Activated naive CD4-positive, alpha-beta T cell treated with anti-CD3 and anti-CD28 coated beads for 36 hours (primary cell): ENCODE measurements at regions of chr15 and their contacts with region 1.

Region 1: GRCh38 chr15:52005748-52006701 is 13.0 kb upstream of the MAPK6 start:
- DNase-seq: peak; percentile 58
- H3K4me3 Mint-ChIP-seq: no peak overlapping the region
- H3K27ac Mint-ChIP-seq: peak overlapping the region; percentile 30
- H3K4me1 Mint-ChIP-seq: peaks cover 50% of the 10 kb centered on the region
- H3K27me3 Mint-ChIP-seq: peaks cover 6% of the 10 kb centered on the region

Region 2: GRCh38 chr15:51750792-51751685 is 255.0 kb before region 1 on chr15 and contains the start of gene TMOD2:
- CTCF ChIA-PET with region 1: no interaction called
- intact Hi-C with region 1: no loop called
- DNase-seq: peak; percentile 53
- H3K4me3 Mint-ChIP-seq: peak within 1 kb of the TSS; percentile 81
- H3K27ac Mint-ChIP-seq: no peak within 1 kb of the TSS
- H3K4me1 Mint-ChIP-seq: peaks cover 27% of the 10 kb centered on the region
- H3K27me3 Mint-ChIP-seq: peaks cover 2% of the 10 kb centered on the region
- total RNA-seq, gene TMOD2: 6.4 to 6.8 TPM

Region 3: GRCh38 chr15:51829360-51830275 is 176.4 kb before region 1 on chr15 and contains the start of gene TMOD3:
- CTCF ChIA-PET with region 1: no interaction called
- intact Hi-C with region 1: loop called (anchors 5 kb)
- DNase-seq: peak; percentile 91
- H3K4me3 Mint-ChIP-seq: peak within 1 kb of the TSS; percentile 89
- H3K27ac Mint-ChIP-seq: peak within 1 kb of the TSS; percentile 83
- H3K4me1 Mint-ChIP-seq: peaks cover 39% of the 10 kb centered on the region
- H3K27me3 Mint-ChIP-seq: no peaks in the 10 kb centered on the region
- total RNA-seq, gene TMOD3: 45.9 to 52.8 TPM

Region 4: GRCh38 chr15:51971375-51972133 is 34.5 kb before region 1 on chr15 and contains the start of gene LEO1:
- CTCF ChIA-PET with region 1: interaction called, 4 read pairs
- intact Hi-C with region 1: loop called (anchors 2 kb)
- DNase-seq: peak; percentile 95
- H3K4me3 Mint-ChIP-seq: peak within 1 kb of the TSS; percentile 90
- H3K27ac Mint-ChIP-seq: peak within 1 kb of the TSS; percentile 96
- H3K4me1 Mint-ChIP-seq: peaks cover 24% of the 10 kb centered on the region
- H3K27me3 Mint-ChIP-seq: peaks cover 2% of the 10 kb centered on the region
- total RNA-seq, gene LEO1: 21.0 to 23.8 TPM

Region 5: DNA sequence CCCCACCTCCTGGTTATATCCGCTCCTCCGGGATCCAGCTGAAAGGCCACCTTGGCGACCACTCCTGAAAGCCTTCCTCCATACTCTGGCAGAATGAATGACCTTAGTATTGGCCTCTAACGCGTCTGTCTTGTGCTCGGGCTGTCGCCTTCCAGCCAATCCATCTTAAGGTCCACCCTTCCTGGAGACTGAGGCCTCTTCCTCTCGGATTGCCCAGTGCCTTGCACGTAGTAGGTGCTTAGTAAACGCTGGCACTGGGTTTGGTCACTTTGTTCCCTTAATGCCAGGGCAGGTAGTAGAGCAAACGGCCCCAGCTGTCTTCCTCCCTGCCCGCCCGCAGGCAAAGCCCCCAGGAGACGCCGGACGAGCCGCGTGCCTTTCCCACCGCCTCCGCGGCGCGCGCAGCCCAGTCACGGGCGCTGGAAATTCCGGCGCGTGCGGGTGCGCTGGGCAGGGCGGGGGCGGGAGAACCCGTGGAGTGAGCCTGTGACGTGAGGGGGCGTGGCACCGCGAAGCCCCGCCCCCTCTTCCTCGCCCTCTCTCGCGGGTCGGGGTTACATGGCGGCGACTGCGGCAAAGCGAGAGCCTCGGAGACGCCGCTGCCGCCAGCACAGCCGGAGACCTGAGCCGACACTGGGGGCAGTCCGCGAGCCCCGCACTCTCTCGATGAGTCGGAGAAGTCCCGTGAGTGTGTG is 12.8 kb after region 1 on chr15 and contains the start of gene MAPK6:
- CTCF ChIA-PET with region 1: interaction called, 3 read pairs
- intact Hi-C with region 1: loop called (anchors 1 kb)
- DNase-seq: peak; percentile 93
- H3K4me3 Mint-ChIP-seq: peak within 1 kb of the TSS; percentile 97
- H3K27ac Mint-ChIP-seq: peak within 1 kb of the TSS; percentile 97
- H3K4me1 Mint-ChIP-seq: peaks cover 37% of the 10 kb centered on the region
- H3K27me3 Mint-ChIP-seq: no peaks in the 10 kb centered on the region
- total RNA-seq, gene MAPK6: 16.7 to 17.2 TPM

Region 6: GRCh38 chr15:52078876-52079700 is 73.1 kb after region 1 on chr15:
- CTCF ChIA-PET with region 1: interaction called, 10 read pairs
- intact Hi-C with region 1: no loop called
- DNase-seq: peak; percentile 93
- H3K4me3 Mint-ChIP-seq: no peak overlapping the region
- H3K27ac Mint-ChIP-seq: no peak overlapping the region
- H3K4me1 Mint-ChIP-seq: peaks cover 2% of the 10 kb centered on the region
- H3K27me3 Mint-ChIP-seq: no peaks in the 10 kb centered on the region

Region 7: GRCh38 chr15:52217186-52217585 is 211.2 kb after region 1 on chr15:
- CTCF ChIA-PET with region 1: no interaction called
- intact Hi-C with region 1: loop called (anchors 5 kb)
- DNase-seq: peak; percentile 45
- H3K4me3 Mint-ChIP-seq: no peak overlapping the region
- H3K27ac Mint-ChIP-seq: no peak overlapping the region
- H3K4me1 Mint-ChIP-seq: peaks cover 14% of the 10 kb centered on the region
- H3K27me3 Mint-ChIP-seq: no peaks in the 10 kb centered on the region